ENCODE measurements at regions of chr12 and their contacts with region 1.

Region 1: GRCh38 chr12:54229624-54230212 is 40.9 kb upstream of the SMUG1 start:
- DNase-seq: no peak
- ATAC-seq: no peak
- H3K4me3 ChIP-seq: no peak overlapping the region
- H3K27ac ChIP-seq: 0 out of 3 replicates have a peak overlapping the region, but pooled peaks have one; percentile 2
- H3K4me1 ChIP-seq: peaks cover 9 to 19% of the 10 kb centered on the region in 2 experiments; a peak in 4 of 5 replicates
- H3K27me3 ChIP-seq: no peaks in the 10 kb centered on the region
- CTCF ChIP-seq: no peak
- EP300 ChIP-seq: no peak
- POLR2A ChIP-seq: no peak
- RAD21 ChIP-seq: no peak

Region 2: GRCh38 chr12:54207484-54208294 is 22.0 kb before region 1 on chr12:
- CTCF ChIA-PET with region 1: no interaction called
- POLR2A ChIA-PET with region 1: no interaction called
- in situ Hi-C with region 1: no loop called
- intact Hi-C with region 1: no loop called
- DNase-seq: peak; percentile 83 to 90 (median 88)
- ATAC-seq: peak; percentile 94
- H3K4me3 ChIP-seq: no peak overlapping the region
- H3K27ac ChIP-seq: no peak overlapping the region
- H3K4me1 ChIP-seq: peaks cover 6 to 13% of the 10 kb centered on the region in 2 experiments
- H3K27me3 ChIP-seq: peaks cover 2 to 14% of the 10 kb centered on the region in 2 experiments; a peak in 2 of 5 replicates
- CTCF ChIP-seq: peak; percentile 93 to 98 (median 94)
- EP300 ChIP-seq: no peak
- POLR2A ChIP-seq: no peak
- RAD21 ChIP-seq: peak; percentile 74 to 94

Region 3: DNA sequence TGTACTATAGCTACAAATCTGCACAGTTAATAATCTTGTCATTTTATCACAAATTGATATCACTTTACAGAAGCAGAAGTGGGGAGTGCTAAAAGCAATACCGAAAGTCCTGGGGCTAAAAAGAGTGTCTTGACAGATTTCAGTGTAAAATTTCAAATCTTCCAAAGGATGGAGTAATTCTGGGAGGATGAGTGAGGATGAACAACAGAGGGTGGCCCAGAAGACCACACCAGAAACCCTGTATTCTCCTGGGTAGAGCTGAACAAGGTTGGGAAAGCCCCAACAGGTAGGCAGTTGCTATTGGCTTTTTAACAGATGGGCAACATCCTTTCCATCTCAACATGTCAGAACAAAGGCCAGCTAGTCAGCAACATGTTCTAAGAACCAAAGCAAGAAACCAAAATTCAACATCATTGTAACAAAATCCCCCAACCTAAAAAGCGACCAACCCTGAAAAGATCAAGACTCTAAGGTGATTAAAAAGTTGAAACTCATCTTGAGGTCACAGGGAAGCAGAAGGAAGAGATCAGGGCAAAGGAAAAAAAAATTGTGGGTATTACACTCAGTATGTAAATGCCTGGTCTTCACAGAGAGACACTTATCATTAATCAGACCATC is 11.4 kb after region 1 on chr12:
- CTCF ChIA-PET with region 1: no interaction called
- POLR2A ChIA-PET with region 1: interaction called, 31 read pairs
- in situ Hi-C with region 1: no loop called
- intact Hi-C with region 1: no loop called
- DNase-seq: no peak
- ATAC-seq: peak; percentile 34; the same call in 2 of the 3 replicates
- H3K4me3 ChIP-seq: no peak overlapping the region
- H3K27ac ChIP-seq: no peak overlapping the region
- H3K4me1 ChIP-seq: peaks cover 4 to 10% of the 10 kb centered on the region in 2 experiments; a peak in 3 of 5 replicates
- H3K27me3 ChIP-seq: no peaks in the 10 kb centered on the region
- CTCF ChIP-seq: no peak
- EP300 ChIP-seq: no peak
- POLR2A ChIP-seq: no peak
- RAD21 ChIP-seq: no peak

Region 4: GRCh38 chr12:54324617-54325441 is 95.1 kb after region 1 on chr12 and contains the start of gene COPZ1:
- CTCF ChIA-PET with region 1: no interaction called
- POLR2A ChIA-PET with region 1: no interaction called
- in situ Hi-C with region 1: no loop called
- intact Hi-C with region 1: no loop called
- DNase-seq: peak; percentile 89 to 99 (median 93)
- ATAC-seq: peak; percentile 90
- H3K4me3 ChIP-seq: peak within 1 kb of the TSS; percentile 70
- H3K27ac ChIP-seq: peak within 1 kb of the TSS; percentile 96
- H3K4me1 ChIP-seq: peaks cover 31 to 44% of the 10 kb centered on the region in 2 experiments; a peak in 4 of 5 replicates
- H3K27me3 ChIP-seq: no peaks in the 10 kb centered on the region
- CTCF ChIP-seq: peak; percentile 84 to 98 (median 87)
- EP300 ChIP-seq: peak; percentile 67
- POLR2A ChIP-seq: peak; percentile 97
- RAD21 ChIP-seq: peak; percentile 91 to 94
- polyA plus RNA-seq, gene COPZ1: 437 to 487 TPM

Region 5: GRCh38 chr12:54603173-54603814 is 373.6 kb after region 1 on chr12:
- CTCF ChIA-PET with region 1: no interaction called
- POLR2A ChIA-PET with region 1: no interaction called
- in situ Hi-C with region 1: no loop called
- intact Hi-C with region 1: no loop called
- DNase-seq: peak; percentile 72 to 79 (median 77)
- ATAC-seq: peak; percentile 98
- H3K4me3 ChIP-seq: no peak overlapping the region
- H3K27ac ChIP-seq: no peak overlapping the region
- H3K4me1 ChIP-seq: no peaks in the 10 kb centered on the region; a peak in 2 of 5 replicates
- H3K27me3 ChIP-seq: peaks cover 0 to 5% of the 10 kb centered on the region in 2 experiments; a peak in 2 of 5 replicates
- CTCF ChIP-seq: peak; percentile 82 to 89 (median 83)
- EP300 ChIP-seq: no peak
- POLR2A ChIP-seq: no peak
- RAD21 ChIP-seq: peak in 1 of 2 experiments; percentile 53; a peak in 2 of 4 replicates

Measured in K562 (cell line).